Heart right ventricle (tissue), 16 donors: ENCODE measurements at regions of chr2 and their contacts with region 1.

Region 1: GRCh38 chr2:217899231-217900009 is 103.4 kb downstream of the TNS1 start:
- DNase-seq: peak in 1 of 2 donors; percentile 68
- ATAC-seq: peak in 7 of 8 donors; percentile 3 to 56 (median 17)
- H3K4me3 ChIP-seq: no peak overlapping the region
- H3K27ac ChIP-seq: peak overlapping the region; percentile 9 to 99 (median 93)
- H3K4me1 ChIP-seq: peaks cover 60 to 83% (median 77%) of the 10 kb centered on the region in 9 donors
- H3K27me3 ChIP-seq: no peaks in the 10 kb centered on the region
- CTCF ChIP-seq: peak; percentile 28 to 72 (median 63)

Region 2: DNA sequence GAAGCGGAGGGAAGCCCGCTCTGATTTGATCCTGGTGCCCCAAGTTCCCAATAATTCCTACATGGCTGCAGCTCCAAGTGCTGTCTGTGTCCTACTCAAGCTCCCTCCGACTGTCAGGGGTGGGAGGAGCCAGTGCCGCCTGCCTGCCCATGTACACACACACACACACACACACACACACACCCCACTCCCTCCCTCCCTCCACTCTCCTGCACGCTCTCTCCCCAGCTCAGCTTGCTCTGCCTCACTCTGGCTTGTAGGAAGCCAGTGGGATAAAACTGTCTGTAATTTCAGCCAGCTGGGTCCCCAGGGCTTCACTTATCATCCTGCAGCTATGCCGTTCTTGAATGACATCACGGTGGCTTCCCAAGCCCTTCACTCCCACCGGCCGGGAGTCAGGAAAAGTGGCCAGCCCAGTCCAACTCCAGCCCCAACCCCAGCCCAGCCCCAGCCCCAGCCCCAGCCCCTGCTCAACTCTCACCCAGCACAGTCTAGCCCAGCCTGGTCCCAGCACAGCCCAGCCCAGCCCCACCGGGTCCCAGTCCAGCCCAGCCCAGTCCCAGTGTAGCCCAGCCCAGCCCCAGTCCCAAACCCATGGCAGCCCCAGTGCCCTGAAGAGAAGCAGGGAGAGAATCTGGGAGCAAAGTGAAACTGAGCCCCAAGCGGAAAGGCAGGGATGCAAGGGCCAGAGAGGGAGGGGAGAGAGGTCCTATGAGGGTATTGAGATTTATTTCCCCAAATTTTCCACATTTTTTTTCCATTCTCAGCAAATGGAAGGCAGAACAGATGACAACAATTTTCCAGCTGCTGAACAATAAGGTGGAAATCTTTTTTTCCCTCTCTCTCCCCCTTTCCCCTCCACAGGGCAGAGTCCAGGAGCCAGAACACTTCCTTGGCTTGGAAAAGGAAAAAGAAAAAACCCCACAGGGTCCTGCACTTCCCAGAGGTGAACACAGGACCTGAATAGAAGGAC is 40.6 kb before region 1 on chr2:
- intact Hi-C with region 1: no loop called
- DNase-seq: peak; percentile 81 to 93
- ATAC-seq: peak; percentile 77 to 88 (median 83)
- H3K4me3 ChIP-seq: peak overlapping the region; percentile 14 to 68 (median 52)
- H3K27ac ChIP-seq: peak overlapping the region; percentile 82 to 99 (median 92)
- H3K4me1 ChIP-seq: peaks cover 21 to 96% (median 83%) of the 10 kb centered on the region in 9 donors
- H3K27me3 ChIP-seq: no peaks in the 10 kb centered on the region
- CTCF ChIP-seq: no peak

Region 3: DNA sequence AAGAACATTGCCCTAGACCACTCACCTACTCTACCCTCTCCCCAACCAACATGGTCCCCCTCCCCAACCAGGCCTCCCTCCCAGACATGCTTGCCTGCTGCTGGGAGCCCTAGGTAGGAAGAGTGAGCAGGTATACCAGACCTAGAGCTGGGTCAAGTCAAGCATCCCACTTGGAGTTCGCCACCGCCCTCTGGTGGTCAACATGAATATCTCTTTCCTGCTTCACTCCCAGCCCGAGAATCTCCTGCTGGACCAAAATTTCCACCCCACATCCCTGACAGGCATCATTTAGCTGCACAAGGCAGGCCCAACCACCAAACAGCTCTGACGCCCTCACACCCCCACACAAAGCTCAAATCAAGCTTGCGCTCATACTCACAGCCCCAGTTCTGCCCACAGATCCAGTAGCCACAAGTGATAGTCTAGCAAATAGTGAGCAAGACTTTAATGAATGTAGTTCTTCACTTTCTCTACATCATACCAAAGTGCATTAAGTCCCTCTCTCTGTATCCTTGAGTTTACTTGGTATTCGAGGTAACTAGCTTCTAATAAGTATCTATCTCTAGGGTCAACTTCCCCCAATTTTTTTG is 12.6 kb before region 1 on chr2:
- intact Hi-C with region 1: loop called in 1 of 10 experiments (anchors 2 kb)
- DNase-seq: peak; percentile 72 to 82
- ATAC-seq: peak in 7 of 8 donors; percentile 18 to 67 (median 47)
- H3K4me3 ChIP-seq: no peak overlapping the region
- H3K27ac ChIP-seq: peak overlapping the region in 7 of 10 donors; percentile 4 to 83 (median 57)
- H3K4me1 ChIP-seq: peaks cover 25 to 69% (median 57%) of the 10 kb centered on the region in 9 donors
- H3K27me3 ChIP-seq: no peaks in the 10 kb centered on the region
- CTCF ChIP-seq: peak; percentile 73 to 89 (median 81)

Region 4: DNA sequence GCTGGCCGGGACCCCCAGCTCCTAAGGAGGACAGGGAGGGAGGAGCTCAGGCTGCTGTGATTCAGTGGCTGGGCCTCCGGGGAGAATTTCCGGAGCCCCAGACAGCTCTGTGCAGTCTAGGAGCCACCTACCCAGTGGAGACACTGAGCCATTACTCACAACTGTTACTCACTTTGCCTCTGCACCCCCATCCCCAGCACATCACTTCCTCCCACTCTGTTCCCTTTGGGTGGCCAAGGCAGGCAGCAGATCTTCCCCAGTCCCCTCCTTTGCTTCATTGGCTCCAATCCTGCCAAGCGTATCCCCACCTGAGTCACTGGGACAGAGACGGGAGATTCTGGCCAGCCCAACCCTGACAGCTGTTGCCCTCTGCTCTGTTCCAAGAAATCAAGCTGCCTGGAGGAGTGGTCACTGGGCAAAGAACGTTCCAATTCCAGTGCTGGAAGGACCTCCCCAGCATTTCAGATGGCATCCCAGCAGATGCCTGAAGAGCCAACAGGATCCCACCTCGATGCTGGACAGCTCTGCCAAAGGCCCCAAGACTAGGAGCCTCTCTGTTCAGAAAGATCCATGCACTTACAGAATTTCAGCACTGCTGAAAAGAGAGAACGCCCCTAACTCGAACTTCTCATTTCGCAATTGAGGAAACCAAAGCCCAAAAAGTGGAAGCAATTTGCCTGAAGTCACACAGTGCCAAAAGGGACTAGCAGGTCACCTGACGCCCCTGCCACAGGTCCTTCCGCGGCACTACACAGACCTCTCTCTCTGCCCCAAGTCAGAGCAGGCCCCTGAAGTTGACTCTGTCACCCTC is 35.1 kb after region 1 on chr2:
- intact Hi-C with region 1: loop called in 5 of 10 experiments (anchors 2 to 5 kb)
- DNase-seq: peak in 1 of 2 donors; percentile 69
- ATAC-seq: peak; percentile 4 to 65 (median 19)
- H3K4me3 ChIP-seq: peak overlapping the region; percentile 7 to 98 (median 28)
- H3K27ac ChIP-seq: peak overlapping the region; percentile 84 to 99 (median 96)
- H3K4me1 ChIP-seq: peaks cover 91 to 100% (median 100%) of the 10 kb centered on the region in 9 donors
- H3K27me3 ChIP-seq: no peaks in the 10 kb centered on the region
- CTCF ChIP-seq: no peak

Region 5: DNA sequence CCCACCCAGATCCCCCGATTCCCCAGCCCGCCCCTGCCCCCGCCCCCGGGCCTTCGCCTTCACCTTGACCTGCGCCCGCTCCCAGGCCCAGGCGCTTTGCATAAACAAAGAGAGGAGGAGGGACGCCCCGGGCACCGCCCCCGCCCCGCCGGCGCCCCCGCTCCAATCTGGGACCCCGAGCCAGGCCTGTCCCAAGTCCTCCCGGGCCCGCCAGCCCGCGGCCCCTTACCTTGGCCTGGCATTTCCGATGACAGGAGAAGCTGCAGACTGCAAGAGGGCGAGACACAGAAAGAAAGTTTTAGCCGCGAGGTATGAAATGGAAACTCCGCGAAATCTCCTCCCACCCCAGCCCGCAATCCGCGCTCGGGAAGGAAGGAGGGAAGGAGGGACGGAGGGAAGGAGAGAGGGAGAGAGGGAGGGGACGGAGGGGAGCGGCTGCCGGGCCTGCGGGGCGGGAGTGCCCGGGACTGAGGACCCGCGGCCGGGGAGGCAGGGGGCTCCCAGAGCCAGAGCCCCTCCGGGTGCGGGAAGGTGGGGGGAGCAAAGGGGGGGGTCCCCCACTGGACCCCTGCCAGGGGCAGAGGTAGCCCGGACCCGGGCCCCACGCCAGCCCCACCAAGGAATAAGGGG is 79.2 kb after region 1 on chr2:
- intact Hi-C with region 1: loop called in 1 of 10 experiments (anchors 5 kb)
- DNase-seq: no peak
- ATAC-seq: peak; percentile 23 to 57 (median 38)
- H3K4me3 ChIP-seq: peak overlapping the region; percentile 36 to 70 (median 60)
- H3K27ac ChIP-seq: peak overlapping the region; percentile 67 to 90 (median 86)
- H3K4me1 ChIP-seq: peaks cover 20 to 94% (median 68%) of the 10 kb centered on the region in 9 donors
- H3K27me3 ChIP-seq: no peaks in the 10 kb centered on the region
- CTCF ChIP-seq: no peak

Region 6: GRCh38 chr2:217988014-217988839 is 88.8 kb after region 1 on chr2:
- intact Hi-C with region 1: loop called in 3 of 10 experiments (anchors 5 kb)
- DNase-seq: peak; percentile 84 to 91
- ATAC-seq: peak; percentile 78 to 91 (median 88)
- H3K4me3 ChIP-seq: peak overlapping the region in 2 of 10 donors; percentile 9 to 10
- H3K27ac ChIP-seq: peak overlapping the region; percentile 19 to 90 (median 75)
- H3K4me1 ChIP-seq: peaks cover 13 to 63% (median 38%) of the 10 kb centered on the region in 9 donors
- H3K27me3 ChIP-seq: no peaks in the 10 kb centered on the region
- CTCF ChIP-seq: peak; percentile 83 to 92 (median 90)

Region 7: DNA sequence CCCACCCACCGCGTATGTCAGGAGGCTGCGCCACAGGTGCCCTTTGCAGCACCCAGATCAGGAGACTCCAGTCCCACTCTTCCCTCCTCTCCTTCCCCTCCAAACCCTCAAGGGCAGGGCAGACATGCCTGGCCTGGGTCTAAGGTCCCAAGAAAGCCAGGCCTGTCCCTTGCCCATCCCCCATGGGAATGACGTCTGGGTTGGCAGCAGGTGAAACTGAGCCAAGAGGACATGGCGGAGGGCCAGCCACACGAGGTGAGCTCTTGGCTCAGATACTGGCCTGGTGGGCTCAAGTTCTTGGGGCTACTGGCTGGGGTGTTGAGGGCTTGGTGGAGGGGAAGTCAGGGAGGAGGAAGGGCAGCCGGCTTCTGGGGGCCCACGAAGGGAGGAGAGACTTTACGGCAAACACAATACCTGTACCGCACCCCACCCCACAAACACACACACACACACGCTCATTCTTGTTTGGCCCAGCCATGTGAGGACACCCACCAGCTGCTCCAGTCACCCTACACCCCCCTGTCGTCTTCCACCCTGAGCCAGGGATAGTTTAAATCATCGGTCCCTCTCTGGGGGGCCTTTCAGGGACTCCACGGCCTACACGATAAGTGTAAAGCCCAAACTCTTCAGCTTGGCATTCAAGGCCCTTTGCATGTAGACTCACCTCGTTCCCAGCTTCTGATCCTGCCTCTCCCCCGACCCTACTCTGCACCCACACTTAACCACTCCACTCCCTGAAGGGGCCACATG is 127.4 kb after region 1 on chr2:
- intact Hi-C with region 1: no loop called
- DNase-seq: peak in 1 of 2 donors; percentile 65
- ATAC-seq: peak in 7 of 8 donors; percentile 1 to 54 (median 38)
- H3K4me3 ChIP-seq: no peak overlapping the region
- H3K27ac ChIP-seq: peak overlapping the region in 6 of 10 donors; percentile 1 to 87 (median 26)
- H3K4me1 ChIP-seq: peaks cover 4 to 78% (median 41%) of the 10 kb centered on the region in 9 donors
- H3K27me3 ChIP-seq: no peaks in the 10 kb centered on the region
- CTCF ChIP-seq: no peak